Cardiac septum (tissue), 1 donor: ENCODE measurements at regions of chr4 and their contacts with region 1.

Region 1: GRCh38 chr4:112515304-112516067 is 494 bp downstream of the NEUROG2 start:
- DNase-seq: no peak

Region 2: GRCh38 chr4:112348488-112349158 is 166.9 kb before region 1 on chr4:
- intact Hi-C with region 1: loop called (anchors 5 kb)
- DNase-seq: peak; percentile 85

Region 3: DNA sequence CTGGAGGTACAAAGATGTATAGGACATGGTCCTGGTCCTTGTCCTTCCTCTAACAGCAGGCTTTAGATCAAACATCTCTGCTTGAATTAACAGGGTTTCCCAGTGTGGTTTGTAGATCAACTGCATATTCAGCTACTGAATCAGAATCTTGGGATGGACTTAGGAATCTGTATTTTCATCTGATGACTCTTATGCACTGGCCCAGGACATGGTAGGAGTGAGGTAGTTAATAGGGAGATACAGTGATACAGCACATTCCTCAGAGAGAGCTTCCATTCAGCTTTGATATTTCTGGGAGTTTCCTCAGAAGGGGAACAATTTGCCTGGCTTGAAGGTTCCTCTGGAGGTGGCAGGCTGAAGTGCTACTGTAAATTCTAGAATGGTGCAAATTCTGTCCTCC is 324.6 kb after region 1 on chr4:
- intact Hi-C with region 1: no loop called
- DNase-seq: no peak